Breast epithelium (tissue), 4 donors: ENCODE measurements at regions of chr9 and their contacts with region 1.

Region 1: DNA sequence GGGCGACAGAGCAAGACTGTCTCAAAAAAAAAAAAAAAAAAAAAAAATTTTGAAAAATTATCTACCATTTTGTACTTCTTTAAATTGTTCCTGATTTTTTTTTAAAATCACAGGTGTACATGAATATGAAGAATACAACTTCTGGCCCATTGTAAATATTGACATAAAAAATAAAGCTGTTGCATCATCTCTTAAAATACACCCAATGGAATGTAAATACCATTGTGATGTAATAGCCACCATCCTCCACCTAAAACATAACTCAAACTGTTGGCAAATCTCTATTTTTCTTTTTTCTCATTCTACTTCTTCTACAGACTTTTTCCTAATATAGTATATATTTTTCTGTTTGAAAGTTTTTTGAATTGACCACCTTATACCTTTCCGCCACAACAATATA is 61.0 kb upstream of the TEX48 start:
- DNase-seq: no peak
- H3K4me3 ChIP-seq: no peak overlapping the region
- H3K27ac ChIP-seq: no peak overlapping the region
- H3K4me1 ChIP-seq: no peaks in the 10 kb centered on the region
- H3K27me3 ChIP-seq: no peaks in the 10 kb centered on the region
- CTCF ChIP-seq: no peak
- POLR2A ChIP-seq: no peak

Region 2: DNA sequence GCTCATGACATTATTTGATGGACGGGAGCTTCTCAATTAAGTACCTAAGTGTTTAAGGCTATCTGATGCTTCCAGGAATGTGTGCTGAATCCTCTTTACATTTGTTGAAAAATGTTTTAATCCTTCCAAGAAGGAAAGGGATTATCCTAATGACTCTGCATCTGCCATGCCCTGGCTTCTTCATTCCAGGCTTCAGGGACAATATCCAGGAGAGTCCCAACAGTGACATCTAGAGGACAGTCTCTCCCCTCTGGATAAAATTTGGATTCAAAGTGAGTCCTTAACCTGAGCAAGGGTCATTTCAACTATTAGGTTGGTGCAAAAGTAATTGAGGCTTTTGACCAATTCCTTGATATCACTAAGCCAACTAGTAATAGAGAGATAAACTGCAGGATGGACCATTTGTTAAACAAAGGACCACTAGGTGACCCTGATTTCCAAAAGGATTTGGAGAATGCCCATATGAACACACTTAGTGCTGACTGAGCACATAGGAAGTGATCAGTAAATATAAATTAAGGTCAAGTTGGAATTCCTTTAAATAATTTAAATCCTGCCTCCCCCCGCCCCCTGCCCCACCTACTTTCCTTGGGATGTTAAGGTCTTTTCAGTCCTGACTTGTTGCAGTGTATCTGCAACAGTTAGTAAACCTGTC is 168.3 kb after region 1 on chr9:
- intact Hi-C with region 1: loop called (anchors 5 kb)
- DNase-seq: no peak
- H3K4me3 ChIP-seq: no peak overlapping the region
- H3K27ac ChIP-seq: peak overlapping the region; percentile 53 to 59
- H3K4me1 ChIP-seq: peaks cover 4 to 19% of the 10 kb centered on the region in 2 donors
- H3K27me3 ChIP-seq: no peaks in the 10 kb centered on the region
- CTCF ChIP-seq: peak; percentile 35 to 76 (median 58)
- POLR2A ChIP-seq: no peak